ENCODE measurements at regions of chr17 and their contacts with region 1.

Region 1: DNA sequence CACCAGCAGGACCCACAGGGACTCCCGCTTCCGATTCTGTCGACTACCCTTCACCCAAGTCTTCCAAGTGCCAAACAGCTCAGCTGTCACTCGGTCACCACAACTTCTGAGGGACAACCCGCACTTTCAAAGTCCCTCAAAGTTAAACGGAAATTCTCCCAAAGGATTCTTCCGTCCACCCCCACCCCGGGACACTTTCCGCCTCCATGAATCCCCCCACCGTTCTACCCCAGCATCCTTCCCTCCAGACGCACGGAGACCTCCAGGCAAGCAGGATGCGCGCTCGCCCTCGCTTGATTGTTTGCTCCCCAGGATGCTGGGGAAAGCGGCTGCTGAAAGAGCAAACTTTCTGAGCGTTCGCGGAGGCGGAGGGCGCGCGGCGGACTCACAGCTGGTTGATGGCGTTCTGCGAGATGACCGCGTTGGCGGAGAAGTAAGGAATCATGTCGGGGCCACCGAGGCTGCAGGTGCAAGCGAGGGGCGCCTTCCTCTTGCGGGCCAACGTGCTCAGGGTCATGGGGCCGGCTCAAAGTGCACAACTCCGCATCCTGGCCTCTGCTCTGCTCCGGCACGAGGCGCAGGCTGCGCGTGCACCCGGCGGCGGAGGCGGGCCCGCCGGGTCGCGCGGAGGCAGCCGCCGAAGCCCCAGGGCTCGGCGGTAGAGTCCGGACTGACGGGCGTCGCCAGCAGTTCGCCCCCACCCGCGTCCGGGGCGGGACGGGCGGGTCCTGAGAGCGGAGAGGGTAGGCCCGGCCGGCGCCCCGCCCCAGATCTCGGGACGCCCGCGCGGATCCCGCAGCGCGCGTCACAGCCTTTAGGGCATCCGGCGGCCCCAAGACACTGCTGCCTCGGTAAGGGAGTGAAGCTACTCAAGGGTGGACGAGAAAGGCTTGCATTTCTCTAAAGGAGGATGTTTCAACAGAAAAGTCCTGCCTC is 138.3 kb upstream of the CORO6 start:
- DNase-seq: peak; percentile 55
- ATAC-seq: peak; percentile 92
- H3K4me3 ChIP-seq: peak overlapping the region; percentile 88
- H3K27ac ChIP-seq: peak overlapping the region; percentile 90
- H3K4me1 ChIP-seq: peaks cover 11% of the 10 kb centered on the region; the same call in 1 of the 2 replicates
- H3K27me3 ChIP-seq: no peaks in the 10 kb centered on the region
- CTCF ChIP-seq: no peak
- EP300 ChIP-seq: 0 out of 4 replicates have a peak, but pooled peaks of 1 of the 2 experiments have one; percentile 4
- POLR2A ChIP-seq: peak; percentile 91
- RAD21 ChIP-seq: no peak

Region 2: GRCh38 chr17:28818819-28819221 is 942.2 kb before region 1 on chr17:
- CTCF ChIA-PET with region 1: no interaction called
- POLR2A ChIA-PET with region 1: no interaction called
- RAD21 ChIA-PET with region 1: no interaction called
- SMC1A ChIA-PET with region 1: no interaction called
- in situ Hi-C with region 1: no loop called
- intact Hi-C with region 1: no loop called
- DNase-seq: no peak
- ATAC-seq: no peak
- H3K4me3 ChIP-seq: no peak overlapping the region
- H3K27ac ChIP-seq: no peak overlapping the region
- H3K4me1 ChIP-seq: no peaks in the 10 kb centered on the region
- H3K27me3 ChIP-seq: no peaks in the 10 kb centered on the region
- CTCF ChIP-seq: no peak
- EP300 ChIP-seq: no peak
- POLR2A ChIP-seq: no peak
- RAD21 ChIP-seq: no peak

Region 3: GRCh38 chr17:29005936-29006511 is 755.0 kb before region 1 on chr17 and contains the start of gene SEZ6:
- CTCF ChIA-PET with region 1: no interaction called
- POLR2A ChIA-PET with region 1: no interaction called
- RAD21 ChIA-PET with region 1: no interaction called
- SMC1A ChIA-PET with region 1: no interaction called
- in situ Hi-C with region 1: no loop called
- intact Hi-C with region 1: no loop called
- DNase-seq: no peak
- ATAC-seq: peak; percentile 81
- H3K4me3 ChIP-seq: no peak within 1 kb of the TSS
- H3K27ac ChIP-seq: no peak within 1 kb of the TSS
- H3K4me1 ChIP-seq: no peaks in the 10 kb centered on the region
- H3K27me3 ChIP-seq: peaks cover 4 to 18% of the 10 kb centered on the region in 2 experiments
- CTCF ChIP-seq: no peak
- EP300 ChIP-seq: no peak
- POLR2A ChIP-seq: no peak
- RAD21 ChIP-seq: no peak
- polyA plus RNA-seq, gene SEZ6: 0.05 to 0.24 TPM

Region 4: DNA sequence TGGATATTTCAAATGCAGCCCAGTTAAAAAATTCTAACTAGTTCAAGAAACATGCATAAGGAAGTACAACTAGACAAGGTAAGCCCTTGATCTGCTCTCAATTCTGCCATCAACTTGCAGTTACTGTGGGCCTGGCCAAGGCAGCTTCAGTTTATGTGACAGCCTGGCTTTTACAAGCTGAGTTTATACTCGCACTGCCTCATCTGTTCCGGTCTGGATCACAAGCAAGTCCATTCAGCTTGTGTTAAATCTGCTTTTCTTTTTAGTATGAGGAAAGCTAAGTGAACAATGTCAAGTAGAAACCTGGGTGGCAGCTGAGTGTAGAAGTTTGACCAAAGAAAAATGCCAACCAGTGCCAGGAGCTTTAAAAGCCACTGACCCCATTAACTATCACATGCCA is 61.7 kb before region 1 on chr17:
- CTCF ChIA-PET with region 1: no interaction called
- POLR2A ChIA-PET with region 1: interaction called, 54 read pairs
- RAD21 ChIA-PET with region 1: interaction called, 65 read pairs
- SMC1A ChIA-PET with region 1: interaction called, 39 read pairs
- in situ Hi-C with region 1: no loop called
- intact Hi-C with region 1: no loop called
- DNase-seq: no peak
- ATAC-seq: no peak
- H3K4me3 ChIP-seq: no peak overlapping the region
- H3K27ac ChIP-seq: no peak overlapping the region
- H3K4me1 ChIP-seq: peaks cover under 1% of the 10 kb centered on the region; the same call in 1 of the 2 replicates
- H3K27me3 ChIP-seq: no peaks in the 10 kb centered on the region
- CTCF ChIP-seq: no peak
- EP300 ChIP-seq: no peak
- POLR2A ChIP-seq: no peak
- RAD21 ChIP-seq: no peak

Region 5: GRCh38 chr17:29710891-29711418 is 50.1 kb before region 1 on chr17:
- CTCF ChIA-PET with region 1: interaction called, 8 read pairs
- POLR2A ChIA-PET with region 1: interaction called, 54 read pairs
- RAD21 ChIA-PET with region 1: interaction called, 65 read pairs
- SMC1A ChIA-PET with region 1: interaction called, 39 read pairs
- in situ Hi-C with region 1: no loop called
- intact Hi-C with region 1: loop called (anchors 1 kb)
- DNase-seq: no peak
- ATAC-seq: no peak
- H3K4me3 ChIP-seq: no peak overlapping the region
- H3K27ac ChIP-seq: no peak overlapping the region
- H3K4me1 ChIP-seq: peaks cover 32% of the 10 kb centered on the region
- H3K27me3 ChIP-seq: no peaks in the 10 kb centered on the region
- CTCF ChIP-seq: no peak
- EP300 ChIP-seq: no peak
- POLR2A ChIP-seq: no peak
- RAD21 ChIP-seq: no peak